ENCODE measurements at regions of chr3 and their contacts with region 1.

Region 1: GRCh38 chr3:52056968-52057805 is 816 bp upstream of the DUSP7 start:
- DNase-seq: peak; percentile 100
- ATAC-seq: peak; percentile 81
- H3K4me3 Mint-ChIP-seq: peak overlapping the region; percentile 85
- H3K27ac Mint-ChIP-seq: peak overlapping the region; percentile 93
- H3K4me1 Mint-ChIP-seq: peaks cover 30% of the 10 kb centered on the region
- H3K27me3 Mint-ChIP-seq: no peaks in the 10 kb centered on the region

Region 2: DNA sequence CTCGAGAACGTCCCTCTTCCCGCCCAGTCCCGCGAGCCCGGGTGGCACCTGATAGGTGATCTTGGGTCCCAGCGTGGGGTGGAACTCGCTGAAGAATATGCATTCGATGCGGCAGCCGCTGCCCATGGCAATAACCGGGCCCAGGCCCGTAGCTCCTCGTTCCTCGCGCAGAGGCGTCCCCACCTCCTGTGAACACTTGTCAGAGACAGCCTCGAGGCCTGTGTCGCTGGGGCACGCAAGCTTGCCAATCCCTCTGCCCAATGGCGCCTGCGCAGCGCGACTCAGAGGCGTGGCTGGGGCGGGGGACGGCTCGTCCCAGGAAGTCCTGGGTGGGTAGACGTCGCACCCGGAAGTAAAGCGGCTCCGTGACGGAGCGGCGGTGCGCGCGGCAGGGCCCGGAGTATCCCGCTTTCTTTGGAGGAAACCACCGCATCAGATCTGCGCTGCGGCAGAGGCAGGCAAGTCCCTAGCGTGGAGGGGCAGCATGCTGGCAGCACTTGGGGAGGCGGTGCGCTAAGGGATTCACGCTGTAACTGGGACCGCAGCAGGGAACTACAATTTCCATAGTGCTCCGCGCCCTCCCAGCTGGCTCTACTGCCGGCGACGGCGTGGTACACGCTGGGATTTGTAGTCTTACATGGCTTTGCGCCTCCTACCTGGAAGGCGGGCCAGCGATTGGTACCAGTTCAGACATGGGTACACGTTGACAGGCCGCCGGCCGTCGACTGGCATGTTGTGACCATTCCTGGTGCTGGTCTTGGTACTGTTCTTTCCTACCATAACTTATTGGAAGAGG is 1706.5 kb before region 1 on chr3 and contains the starts of genes CYB561D2 and NPRL2:
- CTCF ChIA-PET with region 1: no interaction called
- POLR2A ChIA-PET with region 1: no interaction called
- intact Hi-C with region 1: loop called in 1 of 2 experiments (anchors 5 kb)
- DNase-seq: peak; percentile 99
- ATAC-seq: peak; percentile 90
- H3K4me3 Mint-ChIP-seq: peak within 1 kb of the TSS; percentile 90
- H3K27ac Mint-ChIP-seq: peak within 1 kb of the TSS; percentile 97
- H3K4me1 Mint-ChIP-seq: peaks cover 55% of the 10 kb centered on the region
- H3K27me3 Mint-ChIP-seq: no peaks in the 10 kb centered on the region
- total RNA-seq, gene CYB561D2: 10.3 to 14.3 TPM
- total RNA-seq, gene NPRL2: 42.5 to 43.0 TPM

Region 3: GRCh38 chr3:51670823-51671733 is 386.1 kb before region 1 on chr3 and contains the start of gene TEX264:
- CTCF ChIA-PET with region 1: no interaction called
- POLR2A ChIA-PET with region 1: no interaction called
- intact Hi-C with region 1: loop called in 1 of 2 experiments (anchors 1 kb)
- DNase-seq: peak; percentile 94
- ATAC-seq: peak; percentile 66
- H3K4me3 Mint-ChIP-seq: peak within 1 kb of the TSS; percentile 79
- H3K27ac Mint-ChIP-seq: peak within 1 kb of the TSS; percentile 74
- H3K4me1 Mint-ChIP-seq: peaks cover 56% of the 10 kb centered on the region
- H3K27me3 Mint-ChIP-seq: no peaks in the 10 kb centered on the region
- total RNA-seq, gene TEX264: 35.3 to 37.4 TPM

Region 4: DNA sequence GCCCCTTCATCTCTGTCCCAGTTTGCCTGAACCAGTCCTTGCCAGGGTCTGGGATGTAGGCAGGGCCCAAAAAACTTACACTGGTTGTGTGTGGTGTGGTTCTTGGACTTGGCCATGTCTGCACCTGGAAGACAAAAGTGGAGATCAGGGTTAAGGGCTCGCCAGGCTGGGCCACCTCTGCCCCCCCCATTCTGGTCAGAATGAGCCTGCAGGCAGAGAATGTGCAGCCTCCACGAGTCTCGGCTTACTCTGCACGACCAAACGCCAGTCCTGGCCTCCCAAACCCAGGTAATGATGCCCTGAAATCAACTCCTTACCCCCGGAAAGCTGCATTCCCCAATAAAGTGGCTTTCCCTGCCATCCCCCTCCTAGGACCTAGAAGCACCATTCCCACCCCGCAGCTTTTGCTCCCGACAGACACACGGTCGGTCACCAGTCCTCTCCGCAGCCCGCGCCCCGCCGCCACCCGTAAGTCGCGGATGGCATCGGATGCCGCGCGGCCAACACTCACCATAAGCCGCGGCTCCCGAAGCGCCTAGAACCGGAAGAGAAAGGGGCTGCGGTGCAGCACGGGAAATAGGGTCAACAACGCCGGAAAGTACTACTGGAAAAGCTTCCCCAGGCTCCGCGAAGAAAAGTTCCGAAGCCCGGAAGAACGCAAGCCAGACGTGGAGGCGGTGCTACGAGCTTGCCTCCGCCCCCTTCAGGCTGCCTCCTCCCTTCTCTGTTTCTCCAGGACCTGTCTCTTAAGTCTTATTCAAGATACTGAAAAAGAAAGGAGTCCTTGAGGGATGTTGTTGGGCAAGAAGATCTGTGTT is 61.6 kb before region 1 on chr3 and contains the start of gene RPL29:
- CTCF ChIA-PET with region 1: interaction called, 30 read pairs
- POLR2A ChIA-PET with region 1: interaction called, 7 read pairs
- intact Hi-C with region 1: loop called (anchors 1 to 2 kb)
- DNase-seq: peak; percentile 96
- ATAC-seq: peak; percentile 95
- H3K4me3 Mint-ChIP-seq: peak within 1 kb of the TSS; percentile 100
- H3K27ac Mint-ChIP-seq: peak within 1 kb of the TSS; percentile 100
- H3K4me1 Mint-ChIP-seq: peaks cover 26% of the 10 kb centered on the region
- H3K27me3 Mint-ChIP-seq: no peaks in the 10 kb centered on the region
- total RNA-seq, gene RPL29: 1,975 to 2,071 TPM

Region 5: GRCh38 chr3:52154117-52155094 is 97.2 kb after region 1 on chr3 and contains the start of gene POC1A:
- CTCF ChIA-PET with region 1: interaction called, 13 read pairs
- POLR2A ChIA-PET with region 1: interaction called, 18 read pairs
- intact Hi-C with region 1: loop called (anchors 1 kb)
- DNase-seq: peak; percentile 95
- ATAC-seq: peak; percentile 89
- H3K4me3 Mint-ChIP-seq: peak within 1 kb of the TSS; percentile 80
- H3K27ac Mint-ChIP-seq: peak within 1 kb of the TSS; percentile 93
- H3K4me1 Mint-ChIP-seq: peaks cover 19% of the 10 kb centered on the region
- H3K27me3 Mint-ChIP-seq: no peaks in the 10 kb centered on the region
- total RNA-seq, gene POC1A: 23.4 to 26.1 TPM

Region 6: GRCh38 chr3:52291508-52292181 is 234.5 kb after region 1 on chr3:
- CTCF ChIA-PET with region 1: no interaction called
- POLR2A ChIA-PET with region 1: no interaction called
- intact Hi-C with region 1: loop called in 1 of 2 experiments (anchors 1 kb)
- DNase-seq: peak; percentile 66
- ATAC-seq: no peak
- H3K4me3 Mint-ChIP-seq: no peak overlapping the region
- H3K27ac Mint-ChIP-seq: no peak overlapping the region
- H3K4me1 Mint-ChIP-seq: peaks cover 16% of the 10 kb centered on the region
- H3K27me3 Mint-ChIP-seq: no peaks in the 10 kb centered on the region

Region 7: GRCh38 chr3:52897130-52898122 is 840.2 kb after region 1 on chr3 and contains the start of gene STIMATE:
- CTCF ChIA-PET with region 1: no interaction called
- POLR2A ChIA-PET with region 1: no interaction called
- intact Hi-C with region 1: loop called in 1 of 2 experiments (anchors 2 kb)
- DNase-seq: peak; percentile 91
- ATAC-seq: peak; percentile 82
- H3K4me3 Mint-ChIP-seq: peak within 1 kb of the TSS; percentile 81
- H3K27ac Mint-ChIP-seq: peak within 1 kb of the TSS; percentile 48
- H3K4me1 Mint-ChIP-seq: peaks cover 49% of the 10 kb centered on the region
- H3K27me3 Mint-ChIP-seq: no peaks in the 10 kb centered on the region
- total RNA-seq, gene STIMATE: 12.0 to 17.1 TPM